B cell (primary cell): ENCODE measurements at regions of chr6 and their contacts with region 1.

Region 1: DNA sequence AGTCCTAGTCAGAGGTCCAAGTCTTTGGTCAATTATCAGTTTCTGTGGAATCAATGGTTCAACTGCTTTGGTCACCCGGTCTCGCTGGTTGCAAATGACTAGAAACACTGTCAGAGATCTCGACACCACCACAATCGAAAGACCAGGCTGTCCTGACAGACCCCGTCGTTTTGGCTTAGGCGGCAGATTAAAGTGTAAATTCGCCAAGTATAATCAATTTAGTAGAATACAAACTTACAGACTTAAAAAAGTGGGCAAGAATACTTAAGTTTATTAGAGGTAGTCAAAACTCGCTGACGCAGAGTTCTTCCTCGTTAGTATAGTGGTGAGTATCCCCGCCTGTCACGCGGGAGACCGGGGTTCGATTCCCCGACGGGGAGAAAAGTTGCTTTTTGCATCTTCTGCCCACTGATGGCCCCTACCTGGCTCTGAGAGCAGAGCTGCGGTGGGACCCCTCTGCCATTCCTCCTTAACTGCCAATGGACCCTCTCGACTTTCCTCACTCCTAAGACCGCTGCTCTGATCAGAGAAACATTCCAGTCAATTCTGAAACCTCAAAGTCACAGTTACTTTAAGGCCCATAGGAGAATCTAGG is 30.6 kb upstream of the ZNF184 start:
- DNase-seq: peak; percentile 89
- ATAC-seq: peak; percentile 44
- H3K4me3 ChIP-seq: peak overlapping the region; percentile 48 to 82 (median 74)
- H3K4me3 Mint-ChIP-seq: peak overlapping the region; percentile 85
- H3K27ac ChIP-seq: peak overlapping the region in 1 of 2 donors; percentile 64
- H3K27ac Mint-ChIP-seq: peak overlapping the region; percentile 81
- H3K4me1 ChIP-seq: peaks cover 9 to 24% of the 10 kb centered on the region in 2 donors
- H3K4me1 Mint-ChIP-seq: peaks cover 38% of the 10 kb centered on the region
- H3K27me3 ChIP-seq: peaks cover 0 to 4% (median 1%) of the 10 kb centered on the region in 4 experiments
- H3K27me3 Mint-ChIP-seq: peaks cover 9% of the 10 kb centered on the region
- CTCF ChIP-seq: no peak

Region 2: DNA sequence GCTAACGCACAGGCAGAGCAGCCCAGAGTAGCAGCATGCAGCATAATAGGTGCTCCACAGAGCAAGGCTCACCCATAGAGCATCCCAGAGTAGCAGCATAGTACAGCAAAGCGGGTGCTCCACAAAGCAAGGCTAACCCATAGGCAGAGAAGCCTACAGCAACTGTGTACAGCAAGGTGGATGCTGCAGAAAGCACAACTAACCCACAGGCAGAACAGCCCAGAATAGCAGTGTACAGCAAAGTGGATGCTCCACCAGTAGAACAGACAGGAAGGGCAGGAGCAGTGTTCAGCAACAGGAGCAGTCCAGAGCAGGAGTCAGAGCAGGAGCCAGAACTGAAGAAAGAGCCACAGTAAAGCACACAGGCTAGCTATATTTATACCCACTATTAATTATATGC is 388.7 kb before region 1 on chr6:
- CTCF ChIA-PET with region 1: no interaction called
- POLR2A ChIA-PET with region 1: no interaction called
- intact Hi-C with region 1: no loop called
- DNase-seq: no peak
- ATAC-seq: no peak
- H3K4me3 ChIP-seq: no peak overlapping the region
- H3K4me3 Mint-ChIP-seq: no peak overlapping the region
- H3K27ac ChIP-seq: no peak overlapping the region
- H3K27ac Mint-ChIP-seq: no peak overlapping the region
- H3K4me1 ChIP-seq: no peaks in the 10 kb centered on the region
- H3K4me1 Mint-ChIP-seq: no peaks in the 10 kb centered on the region
- H3K27me3 ChIP-seq: peaks cover 0 to 8% (median 0%) of the 10 kb centered on the region in 4 experiments
- H3K27me3 Mint-ChIP-seq: peaks cover 25% of the 10 kb centered on the region
- CTCF ChIP-seq: no peak

Region 3: GRCh38 chr6:27290065-27290849 is 213.3 kb before region 1 on chr6:
- CTCF ChIA-PET with region 1: no interaction called
- POLR2A ChIA-PET with region 1: no interaction called
- intact Hi-C with region 1: no loop called
- DNase-seq: no peak
- ATAC-seq: no peak
- H3K4me3 ChIP-seq: no peak overlapping the region
- H3K4me3 Mint-ChIP-seq: no peak overlapping the region
- H3K27ac ChIP-seq: no peak overlapping the region
- H3K27ac Mint-ChIP-seq: peak overlapping the region; percentile 37
- H3K4me1 ChIP-seq: peaks cover 0 to 6% of the 10 kb centered on the region in 2 donors
- H3K4me1 Mint-ChIP-seq: no peaks in the 10 kb centered on the region
- H3K27me3 ChIP-seq: peaks cover 4 to 89% (median 80%) of the 10 kb centered on the region in 4 experiments
- H3K27me3 Mint-ChIP-seq: peaks cover 84% of the 10 kb centered on the region
- CTCF ChIP-seq: no peak

Region 4: DNA sequence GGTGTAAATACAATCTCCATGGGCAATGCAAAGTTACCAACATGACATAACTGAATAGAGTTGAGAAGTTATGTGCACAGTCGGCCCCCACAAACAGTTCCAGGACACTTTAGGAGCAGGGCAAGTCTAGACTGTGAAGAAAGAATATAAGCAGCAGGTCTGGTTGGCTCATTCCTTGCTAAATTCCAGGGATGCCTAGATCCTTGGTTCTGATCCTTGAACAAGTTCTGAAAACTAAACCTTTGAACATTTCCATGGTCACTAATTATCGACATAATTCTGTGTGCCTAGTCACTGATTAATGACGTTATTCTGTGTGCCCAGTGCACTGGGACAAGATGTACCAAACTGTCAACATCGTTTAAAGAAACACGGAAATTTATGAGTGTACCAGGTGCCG is 42.8 kb before region 1 on chr6:
- CTCF ChIA-PET with region 1: no interaction called
- POLR2A ChIA-PET with region 1: no interaction called
- intact Hi-C with region 1: no loop called
- DNase-seq: no peak
- ATAC-seq: no peak
- H3K4me3 ChIP-seq: no peak overlapping the region
- H3K4me3 Mint-ChIP-seq: no peak overlapping the region
- H3K27ac ChIP-seq: no peak overlapping the region
- H3K27ac Mint-ChIP-seq: no peak overlapping the region
- H3K4me1 ChIP-seq: no peaks in the 10 kb centered on the region
- H3K4me1 Mint-ChIP-seq: peaks cover 3% of the 10 kb centered on the region
- H3K27me3 ChIP-seq: no peaks in the 10 kb centered on the region
- H3K27me3 Mint-ChIP-seq: no peaks in the 10 kb centered on the region
- CTCF ChIP-seq: no peak

Region 5: GRCh38 chr6:27479319-27480182 is 24.0 kb before region 1 on chr6:
- CTCF ChIA-PET with region 1: interaction called, 8 read pairs
- POLR2A ChIA-PET with region 1: interaction called, 4 read pairs
- intact Hi-C with region 1: loop called (anchors 1 kb)
- DNase-seq: peak; percentile 96
- ATAC-seq: peak; percentile 77
- H3K4me3 ChIP-seq: peak overlapping the region; percentile 88 to 97 (median 95)
- H3K4me3 Mint-ChIP-seq: no peak overlapping the region
- H3K27ac ChIP-seq: peak overlapping the region; percentile 98
- H3K27ac Mint-ChIP-seq: no peak overlapping the region
- H3K4me1 ChIP-seq: peaks cover 15 to 17% of the 10 kb centered on the region in 2 donors
- H3K4me1 Mint-ChIP-seq: peaks cover 6% of the 10 kb centered on the region
- H3K27me3 ChIP-seq: no peaks in the 10 kb centered on the region
- H3K27me3 Mint-ChIP-seq: no peaks in the 10 kb centered on the region
- CTCF ChIP-seq: no peak

Region 6: GRCh38 chr6:28606424-28607400 is 1103.2 kb after region 1 on chr6:
- CTCF ChIA-PET with region 1: no interaction called
- POLR2A ChIA-PET with region 1: no interaction called
- intact Hi-C with region 1: no loop called
- DNase-seq: peak; percentile 16
- ATAC-seq: no peak
- H3K4me3 ChIP-seq: peak overlapping the region in 1 of 5 experiments; percentile 4
- H3K4me3 Mint-ChIP-seq: no peak overlapping the region
- H3K27ac ChIP-seq: no peak overlapping the region
- H3K27ac Mint-ChIP-seq: no peak overlapping the region
- H3K4me1 ChIP-seq: peaks cover 4 to 6% of the 10 kb centered on the region in 2 donors
- H3K4me1 Mint-ChIP-seq: peaks cover 7% of the 10 kb centered on the region
- H3K27me3 ChIP-seq: peaks cover 0 to 35% (median 18%) of the 10 kb centered on the region in 4 experiments
- H3K27me3 Mint-ChIP-seq: peaks cover 68% of the 10 kb centered on the region
- CTCF ChIP-seq: no peak